ENCODE measurements at regions of chr9 and their contacts with region 1.

Region 1: DNA sequence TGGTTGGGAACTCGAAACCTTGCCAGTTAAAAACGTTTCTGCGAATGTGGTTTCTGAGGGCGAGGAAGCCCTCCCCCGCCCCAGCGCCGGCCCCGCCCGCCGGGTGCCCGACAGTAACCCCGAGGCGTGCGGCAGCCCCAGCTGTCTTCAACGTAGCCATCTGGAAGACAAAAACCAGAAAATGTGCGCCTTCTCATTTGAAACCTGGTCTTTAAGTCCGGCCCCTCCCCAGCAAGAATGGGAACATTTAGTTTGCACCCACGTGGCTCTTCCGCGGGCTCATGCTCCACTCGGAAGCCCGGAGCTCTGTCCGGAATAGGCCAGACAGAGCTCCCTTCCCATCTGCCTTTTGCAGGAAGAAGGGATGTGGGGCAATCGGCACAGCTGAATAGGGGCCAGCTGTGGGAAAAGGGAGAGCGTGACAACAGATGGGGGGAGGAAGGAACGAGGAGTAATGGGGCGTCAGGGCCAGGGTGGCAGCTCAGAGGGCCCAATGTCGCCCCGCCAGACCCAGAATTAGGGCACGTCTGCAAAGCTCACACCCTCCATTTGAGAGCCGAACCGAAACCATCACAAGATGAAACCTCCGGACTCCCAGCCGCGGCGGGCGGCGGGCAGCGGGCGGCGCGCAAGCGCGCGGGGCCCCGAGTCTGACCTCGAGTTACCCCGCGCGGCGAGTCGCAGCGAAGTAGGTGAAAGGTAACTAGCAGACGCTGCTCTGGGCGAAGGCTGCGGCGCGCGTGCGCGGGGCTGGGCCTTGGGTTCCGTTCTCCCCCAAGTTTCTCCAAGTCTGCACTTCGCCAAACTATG is 63.4 kb upstream of the ABCA1 start:
- DNase-seq: peak; percentile 77 to 94 (median 89)

Region 2: GRCh38 chr9:105064315-105065097 is 73.2 kb after region 1 on chr9:
- intact Hi-C with region 1: loop called (anchors 5 kb)
- DNase-seq: peak; percentile 74 to 94 (median 88)